Activated CD8-positive, alpha-beta T cell treated with anti-CD3 and anti-CD28 coated beads, Interleukin-2, amount 10 ng/mL, durations not matched to agents 7 days and 5 days (primary cell): ENCODE measurements at regions of chr7 and their contacts with region 1.

Region 1: GRCh38 chr7:144835652-144836544 is at the start of gene TPK1:
- DNase-seq: peak; percentile 93
- ATAC-seq: peak; percentile 86
- H3K4me3 Mint-ChIP-seq: peak within 1 kb of the TSS; percentile 94
- H3K27ac Mint-ChIP-seq: peak within 1 kb of the TSS; percentile 99
- H3K4me1 Mint-ChIP-seq: peaks cover 35% of the 10 kb centered on the region
- H3K27me3 Mint-ChIP-seq: no peaks in the 10 kb centered on the region
- total RNA-seq, gene TPK1: 10.2 to 10.7 TPM

Region 2: GRCh38 chr7:144738708-144739314 is 97.1 kb before region 1 on chr7:
- CTCF ChIA-PET with region 1: interaction called, 14 read pairs
- POLR2A ChIA-PET with region 1: no interaction called
- DNase-seq: peak; percentile 32
- ATAC-seq: no peak
- H3K4me3 Mint-ChIP-seq: no peak overlapping the region
- H3K27ac Mint-ChIP-seq: no peak overlapping the region
- H3K4me1 Mint-ChIP-seq: no peaks in the 10 kb centered on the region
- H3K27me3 Mint-ChIP-seq: no peaks in the 10 kb centered on the region

Region 3: DNA sequence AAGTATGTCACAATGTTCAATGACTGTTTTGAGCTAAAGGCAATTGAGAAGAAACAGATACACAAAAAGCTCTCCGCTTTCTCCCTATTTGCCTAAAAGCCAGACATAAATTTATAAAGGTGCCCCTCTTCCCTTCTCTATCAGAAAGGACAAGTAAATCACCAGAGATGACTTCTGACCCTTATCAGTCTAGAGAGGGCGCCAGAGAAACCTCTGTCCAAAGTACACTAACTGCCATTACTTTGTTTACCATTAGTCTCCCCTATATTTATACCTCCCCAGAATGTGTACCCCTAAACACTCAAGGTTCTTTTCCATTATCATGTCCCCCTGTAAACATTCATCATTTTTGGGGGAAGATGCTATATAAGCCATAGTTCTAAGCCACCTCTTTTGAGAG is 49.4 kb before region 1 on chr7:
- CTCF ChIA-PET with region 1: interaction called, 21 read pairs
- POLR2A ChIA-PET with region 1: interaction called, 5 read pairs
- DNase-seq: peak; percentile 28
- ATAC-seq: peak; percentile 61
- H3K4me3 Mint-ChIP-seq: no peak overlapping the region
- H3K27ac Mint-ChIP-seq: no peak overlapping the region
- H3K4me1 Mint-ChIP-seq: no peaks in the 10 kb centered on the region
- H3K27me3 Mint-ChIP-seq: no peaks in the 10 kb centered on the region

Region 4: GRCh38 chr7:144812379-144813283 is 23.3 kb before region 1 on chr7:
- CTCF ChIA-PET with region 1: interaction called, 30 read pairs
- POLR2A ChIA-PET with region 1: interaction called, 138 read pairs
- DNase-seq: peak; percentile 75
- ATAC-seq: peak; percentile 97
- H3K4me3 Mint-ChIP-seq: peak overlapping the region; percentile 65
- H3K27ac Mint-ChIP-seq: peak overlapping the region; percentile 82
- H3K4me1 Mint-ChIP-seq: peaks cover 43% of the 10 kb centered on the region
- H3K27me3 Mint-ChIP-seq: no peaks in the 10 kb centered on the region

Region 5: GRCh38 chr7:144818511-144818910 is 17.4 kb before region 1 on chr7:
- CTCF ChIA-PET with region 1: interaction called, 30 read pairs
- POLR2A ChIA-PET with region 1: interaction called, 138 read pairs
- DNase-seq: peak; percentile 59
- ATAC-seq: peak; percentile 87
- H3K4me3 Mint-ChIP-seq: no peak overlapping the region
- H3K27ac Mint-ChIP-seq: peak overlapping the region; percentile 74
- H3K4me1 Mint-ChIP-seq: peaks cover 64% of the 10 kb centered on the region
- H3K27me3 Mint-ChIP-seq: no peaks in the 10 kb centered on the region

Region 6: GRCh38 chr7:145123502-145123901 is 287.6 kb after region 1 on chr7:
- CTCF ChIA-PET with region 1: no interaction called
- POLR2A ChIA-PET with region 1: no interaction called
- DNase-seq: no peak
- ATAC-seq: no peak
- H3K4me3 Mint-ChIP-seq: no peak overlapping the region
- H3K27ac Mint-ChIP-seq: no peak overlapping the region
- H3K4me1 Mint-ChIP-seq: no peaks in the 10 kb centered on the region
- H3K27me3 Mint-ChIP-seq: no peaks in the 10 kb centered on the region